ENCODE measurements at regions of chr5 and their contacts with region 1.

Region 1: DNA sequence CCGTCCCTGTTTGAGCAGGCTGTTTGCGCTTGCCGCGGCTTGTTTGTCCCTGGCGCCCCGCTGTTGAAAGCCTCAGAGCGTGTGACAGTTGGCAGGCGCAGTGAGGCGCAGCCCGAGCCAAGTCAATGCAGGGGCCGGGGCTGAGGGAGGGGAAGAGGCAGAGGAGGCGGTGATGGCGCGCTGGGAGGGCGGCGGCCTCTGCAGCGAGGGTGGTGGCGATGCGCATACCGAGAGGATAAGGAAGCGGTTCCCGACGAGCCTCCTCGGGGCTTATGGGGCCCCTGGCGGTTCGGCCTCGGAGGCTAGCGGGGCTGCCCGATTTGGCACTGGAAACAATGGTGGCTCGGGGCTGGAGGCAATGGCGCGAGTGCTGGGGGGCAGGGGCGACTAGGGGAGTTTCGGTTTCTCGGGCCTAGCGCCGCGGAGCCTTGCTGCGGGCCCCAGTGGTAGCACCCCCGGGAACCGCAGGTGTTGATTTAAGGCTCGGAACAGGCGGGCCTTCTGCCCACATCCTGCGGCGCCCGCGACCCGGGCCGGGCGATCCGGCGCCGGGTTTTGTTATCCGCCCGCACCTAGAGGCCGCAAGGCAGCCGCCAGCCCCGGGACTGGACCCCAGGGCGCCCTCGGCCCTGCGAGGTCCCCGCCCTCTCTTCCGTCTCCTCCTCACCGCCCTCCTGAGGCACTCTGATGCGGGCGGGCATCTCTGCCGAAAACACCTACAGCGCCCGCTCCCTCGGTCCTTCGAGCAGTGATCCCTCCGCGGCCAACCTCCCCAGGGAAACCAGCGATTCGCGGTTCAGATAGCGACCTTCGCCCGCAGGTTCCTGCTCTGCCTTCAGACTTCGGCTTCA is 947 bp upstream of the LNPEP start:
- DNase-seq: peak; percentile 91 to 93
- ATAC-seq: peak; percentile 86 to 95 (median 91)
- H3K4me3 ChIP-seq: peak overlapping the region; percentile 73 to 93 (median 88)
- H3K27ac ChIP-seq: peak overlapping the region; percentile 94 to 99 (median 97)
- H3K4me1 ChIP-seq: peaks cover 0 to 61% (median 40%) of the 10 kb centered on the region in 9 donors
- H3K27me3 ChIP-seq: no peaks in the 10 kb centered on the region
- CTCF ChIP-seq: peak in 3 of 9 donors; percentile 2 to 27 (median 16)

Region 2: DNA sequence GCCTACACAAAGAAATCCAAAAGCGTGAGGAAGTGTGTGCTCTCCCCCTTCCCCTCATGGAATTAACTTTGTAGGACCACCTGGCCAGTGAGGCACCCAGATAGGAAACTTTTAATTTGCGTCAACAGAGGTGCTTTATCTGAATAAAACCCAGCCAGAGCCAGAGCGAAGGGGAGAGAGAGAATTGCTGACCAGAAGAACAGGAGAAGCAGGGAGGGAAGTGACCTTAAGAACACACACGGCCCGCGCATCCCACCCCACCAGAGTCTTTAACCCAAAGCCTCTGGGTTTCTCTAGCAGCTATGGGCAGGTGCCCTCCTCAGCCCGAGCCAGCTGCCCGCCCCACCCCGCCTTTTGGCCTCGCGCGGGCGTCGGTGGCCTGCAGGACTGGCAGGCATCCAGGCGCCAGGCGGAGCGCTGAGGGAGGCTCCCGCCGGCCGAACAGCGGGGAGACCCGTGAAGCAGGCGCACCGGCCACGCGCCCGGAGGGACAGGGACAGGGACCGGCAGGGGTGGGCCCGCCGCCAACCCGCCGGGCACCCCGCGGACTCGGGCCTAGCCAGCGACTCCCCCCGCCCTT is 127.8 kb before region 1 on chr5:
- intact Hi-C with region 1: loop called in 2 of 10 experiments (anchors 5 to 10 kb)
- DNase-seq: peak; percentile 82 to 88
- ATAC-seq: peak; percentile 67 to 90 (median 73)
- H3K4me3 ChIP-seq: peak overlapping the region; percentile 73 to 93 (median 86)
- H3K27ac ChIP-seq: peak overlapping the region; percentile 95 to 100 (median 100)
- H3K4me1 ChIP-seq: peaks cover 0 to 55% (median 20%) of the 10 kb centered on the region in 9 donors
- H3K27me3 ChIP-seq: no peaks in the 10 kb centered on the region
- CTCF ChIP-seq: peak in 1 of 9 donors; percentile 7

Region 3: GRCh38 chr5:96868603-96869371 is 66.1 kb before region 1 on chr5:
- intact Hi-C with region 1: loop called in 3 of 10 experiments (anchors 5 to 10 kb)
- DNase-seq: peak in 1 of 2 donors; percentile 36
- ATAC-seq: peak; percentile 67 to 92 (median 87)
- H3K4me3 ChIP-seq: no peak overlapping the region
- H3K27ac ChIP-seq: no peak overlapping the region
- H3K4me1 ChIP-seq: no peaks in the 10 kb centered on the region
- H3K27me3 ChIP-seq: no peaks in the 10 kb centered on the region
- CTCF ChIP-seq: peak; percentile 75 to 95 (median 86)

Region 4: GRCh38 chr5:96876292-96876850 is 58.6 kb before region 1 on chr5 and contains the start of gene ERAP2:
- intact Hi-C with region 1: loop called in 4 of 10 experiments (anchors 5 to 10 kb)
- DNase-seq: no peak
- ATAC-seq: peak in 7 of 8 donors; percentile 67 to 88 (median 81)
- H3K4me3 ChIP-seq: peak within 1 kb of the TSS; percentile 34 to 78 (median 67)
- H3K27ac ChIP-seq: peak within 1 kb of the TSS in 9 of 10 donors; percentile 57 to 90 (median 79)
- H3K4me1 ChIP-seq: peaks cover 0 to 49% (median 10%) of the 10 kb centered on the region in 9 donors
- H3K27me3 ChIP-seq: no peaks in the 10 kb centered on the region
- CTCF ChIP-seq: no peak
- total RNA-seq, gene ERAP2: 0.92 to 29.7 (median 5.9) TPM

Region 5: GRCh38 chr5:96973532-96974401 is 38.8 kb after region 1 on chr5:
- intact Hi-C with region 1: loop called in 4 of 10 experiments (anchors 5 kb)
- DNase-seq: no peak
- ATAC-seq: no peak
- H3K4me3 ChIP-seq: no peak overlapping the region
- H3K27ac ChIP-seq: no peak overlapping the region
- H3K4me1 ChIP-seq: peaks cover 0 to 83% (median 68%) of the 10 kb centered on the region in 9 donors
- H3K27me3 ChIP-seq: no peaks in the 10 kb centered on the region
- CTCF ChIP-seq: no peak

Region 6: DNA sequence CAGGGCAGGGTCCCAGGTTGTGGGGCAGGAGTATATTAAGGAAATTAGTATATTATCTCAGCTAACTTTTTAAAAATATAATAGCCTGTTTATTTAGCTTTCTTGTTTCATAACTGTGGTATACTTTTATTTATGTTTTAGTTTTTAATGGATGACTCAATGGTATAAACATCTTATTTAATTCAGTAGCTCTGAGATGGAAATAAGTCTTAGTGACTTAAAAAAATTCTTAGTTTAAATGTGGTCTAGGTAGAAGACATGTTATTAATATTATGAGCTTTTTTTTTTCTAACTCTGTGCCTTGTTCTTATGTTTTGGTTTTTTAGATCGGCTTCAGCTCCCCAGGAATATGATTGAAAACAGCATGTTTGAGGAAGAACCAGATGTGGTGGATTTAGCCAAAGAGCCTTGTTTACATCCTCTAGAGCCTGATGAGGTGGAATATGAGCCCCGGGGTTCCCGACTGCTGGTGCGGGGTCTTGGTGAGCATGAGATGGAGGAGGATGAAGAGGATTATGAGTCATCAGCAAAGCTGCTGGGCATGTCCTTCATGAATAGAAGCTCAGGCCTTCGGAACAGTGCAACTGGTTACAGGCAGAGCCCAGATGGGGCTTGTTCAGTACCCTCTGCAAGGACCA is 44.0 kb after region 1 on chr5:
- intact Hi-C with region 1: loop called in 4 of 10 experiments (anchors 5 kb)
- DNase-seq: no peak
- ATAC-seq: no peak
- H3K4me3 ChIP-seq: no peak overlapping the region
- H3K27ac ChIP-seq: no peak overlapping the region
- H3K4me1 ChIP-seq: peaks cover 0 to 51% (median 31%) of the 10 kb centered on the region in 9 donors
- H3K27me3 ChIP-seq: no peaks in the 10 kb centered on the region
- CTCF ChIP-seq: no peak

Measured in heart right ventricle (tissue), 16 donors.